ENCODE measurements at regions of chr14 and their contacts with region 1.

Region 1: DNA sequence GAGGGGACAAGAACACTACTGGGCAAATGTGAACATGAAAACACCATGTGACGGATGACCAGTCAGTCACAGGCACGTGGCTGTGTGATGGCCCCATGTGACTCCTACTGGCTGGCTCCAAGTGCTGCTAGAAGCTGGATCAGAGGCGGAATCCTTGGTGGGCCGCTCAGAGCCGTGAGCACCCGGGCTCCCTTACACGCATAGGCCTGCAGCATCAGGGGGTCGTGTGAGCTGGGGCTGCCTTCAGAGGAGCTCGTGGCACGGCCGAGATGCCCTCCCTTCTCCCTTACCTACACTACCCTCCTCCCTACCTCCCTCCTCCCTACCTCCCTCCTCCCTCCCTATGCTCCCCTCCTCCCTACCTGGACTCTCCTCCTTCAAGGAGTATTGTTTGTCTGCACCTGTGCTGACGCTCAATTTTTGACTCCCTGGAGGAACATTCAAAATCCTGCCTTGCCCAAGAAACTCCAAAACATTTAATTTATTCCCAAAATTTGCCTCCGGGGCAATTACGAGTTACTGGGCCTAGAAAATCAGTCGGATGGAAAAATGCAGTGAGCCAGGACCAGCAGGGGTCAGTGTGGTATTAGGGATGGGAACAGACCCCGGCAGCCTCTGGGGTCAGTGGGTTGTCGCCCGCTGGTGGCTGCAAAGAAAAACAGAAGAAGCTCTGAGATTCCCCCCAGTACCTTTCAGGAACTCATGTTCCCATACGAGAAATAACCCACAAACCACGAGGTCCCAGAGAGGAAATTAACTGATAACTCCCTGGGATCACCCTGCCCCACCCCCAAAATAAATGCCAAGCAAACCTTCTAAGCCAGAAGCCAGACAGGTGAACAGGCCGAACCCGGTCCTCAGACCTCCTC is 61.2 kb downstream of the C14orf132 start:
- DNase-seq: peak; percentile 77
- ATAC-seq: peak; percentile 63 to 65

Region 2: DNA sequence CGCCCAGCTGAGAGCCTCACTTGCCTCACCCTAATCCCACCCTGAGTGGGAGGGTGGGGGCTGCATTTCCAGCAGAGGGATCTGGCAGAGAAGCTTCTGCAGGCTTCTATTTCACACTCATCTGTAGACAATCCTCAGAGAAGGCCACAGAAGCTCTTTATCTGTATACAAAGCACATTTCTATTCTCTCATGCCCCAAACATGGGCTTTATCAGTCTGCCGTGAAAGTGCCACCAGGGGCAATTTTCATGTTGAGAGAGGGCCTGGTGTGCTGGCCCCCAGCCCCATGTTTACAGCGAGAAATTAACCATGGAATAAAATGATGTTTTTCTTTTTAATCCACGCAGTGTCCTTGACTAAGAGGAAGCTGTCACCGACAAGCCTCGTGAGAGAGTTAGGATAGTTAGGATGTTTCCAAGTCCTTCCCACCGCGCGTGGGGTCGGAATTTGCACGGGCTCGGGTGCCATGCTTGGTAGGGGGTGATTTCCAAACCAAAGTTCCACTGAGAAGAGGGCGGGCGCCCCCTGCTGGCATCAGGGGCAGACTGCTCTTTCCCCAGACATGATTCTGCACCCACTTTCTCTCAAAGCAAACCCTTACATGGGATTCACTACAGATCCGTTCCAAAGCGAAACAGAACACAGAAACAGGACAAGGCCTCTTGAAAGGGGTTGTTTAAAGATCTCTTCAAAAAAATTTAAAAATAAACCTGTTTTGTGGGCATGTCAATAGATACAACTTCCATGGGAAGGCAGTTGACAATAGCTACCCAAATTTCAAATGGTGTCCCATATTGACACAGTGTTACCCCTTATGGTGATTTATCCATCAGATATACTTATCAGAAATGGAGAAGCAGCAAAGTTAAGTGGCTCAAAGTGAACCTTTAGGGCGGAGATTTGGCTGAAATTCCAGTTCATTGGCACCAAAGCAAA is 175.1 kb after region 1 on chr14:
- intact Hi-C with region 1: loop called (anchors 1 to 2 kb)
- DNase-seq: peak; percentile 74
- ATAC-seq: peak; percentile 43 to 64

Region 3: DNA sequence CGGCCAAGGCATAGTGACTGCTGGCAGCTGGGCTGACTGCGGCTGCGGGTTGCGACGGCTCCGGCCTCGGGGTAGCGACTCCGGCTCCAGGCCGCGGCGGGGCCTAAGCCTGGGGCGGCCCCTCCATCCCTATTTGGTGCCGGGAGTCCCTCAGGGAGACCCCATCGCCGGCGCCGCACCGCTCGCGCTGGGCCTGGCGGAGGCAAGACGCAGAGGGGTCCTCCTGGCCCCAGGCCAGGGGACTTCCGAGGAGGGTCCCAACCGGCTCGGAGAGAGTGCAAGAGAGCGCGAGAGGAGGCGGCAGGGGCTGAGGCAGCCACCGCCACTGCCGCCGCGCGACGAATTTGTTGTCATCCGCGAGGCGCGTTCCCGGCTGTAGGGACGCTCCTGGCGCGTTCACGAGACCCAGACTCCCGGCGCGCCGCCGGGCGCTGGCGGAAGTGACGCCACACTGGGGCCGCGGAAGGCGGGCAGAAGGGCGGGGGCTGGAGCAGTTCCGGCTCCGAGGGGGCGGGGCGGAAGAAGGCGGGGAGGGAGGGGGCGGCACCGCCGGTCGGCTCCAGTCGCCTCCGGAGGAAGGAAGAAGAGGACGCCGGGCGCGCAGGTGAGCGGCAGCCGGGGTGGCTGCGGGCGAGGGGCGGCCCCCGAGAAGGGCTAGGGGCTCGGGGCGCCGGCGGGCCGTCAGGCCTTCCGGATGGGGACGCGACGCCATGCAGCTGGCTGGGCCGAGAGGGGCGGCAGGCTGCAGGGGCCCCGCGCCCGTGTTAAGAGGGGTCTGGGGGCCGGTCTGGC is 262.8 kb after region 1 on chr14 and contains the starts of genes ATG2B and GSKIP:
- intact Hi-C with region 1: no loop called
- DNase-seq: peak; percentile 95
- ATAC-seq: peak; percentile 99
- total RNA-seq, gene ATG2B: 12.4 to 13.3 TPM
- total RNA-seq, gene GSKIP: 10.2 to 11.2 TPM

Region 4: GRCh38 chr14:96926001-96926400 is 825.6 kb after region 1 on chr14:
- intact Hi-C with region 1: no loop called
- DNase-seq: no peak
- ATAC-seq: no peak

Measured in left cardiac atrium (tissue), 4 donors.